ENCODE measurements at regions of chr20 and their contacts with region 1.

Region 1: DNA sequence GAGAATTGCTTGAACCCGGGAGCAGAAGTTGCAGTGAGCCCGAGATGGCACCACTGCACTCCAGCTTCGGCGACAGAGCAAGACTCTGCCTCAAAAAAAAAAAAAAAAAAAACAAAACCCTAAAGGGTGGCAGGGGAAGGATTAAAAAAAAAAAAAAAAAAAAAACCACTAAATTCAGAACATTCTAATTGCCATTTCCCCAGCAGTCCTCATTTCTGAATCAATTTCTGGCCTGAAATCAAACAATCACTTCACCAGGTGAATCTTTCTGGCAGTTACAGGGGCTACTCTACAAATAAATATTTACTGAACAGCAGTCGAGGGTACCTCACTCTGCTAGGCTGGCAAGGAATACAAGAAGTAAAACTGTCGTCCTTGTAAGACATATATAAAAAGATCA is 1.2 kb downstream of the UQCC1 start:
- DNase-seq: no peak
- ATAC-seq: no peak
- H3K4me3 Mint-ChIP-seq: peak overlapping the region; percentile 91
- H3K27ac Mint-ChIP-seq: peak overlapping the region; percentile 100
- H3K4me1 Mint-ChIP-seq: peaks cover 21% of the 10 kb centered on the region
- H3K27me3 Mint-ChIP-seq: no peaks in the 10 kb centered on the region

Region 2: DNA sequence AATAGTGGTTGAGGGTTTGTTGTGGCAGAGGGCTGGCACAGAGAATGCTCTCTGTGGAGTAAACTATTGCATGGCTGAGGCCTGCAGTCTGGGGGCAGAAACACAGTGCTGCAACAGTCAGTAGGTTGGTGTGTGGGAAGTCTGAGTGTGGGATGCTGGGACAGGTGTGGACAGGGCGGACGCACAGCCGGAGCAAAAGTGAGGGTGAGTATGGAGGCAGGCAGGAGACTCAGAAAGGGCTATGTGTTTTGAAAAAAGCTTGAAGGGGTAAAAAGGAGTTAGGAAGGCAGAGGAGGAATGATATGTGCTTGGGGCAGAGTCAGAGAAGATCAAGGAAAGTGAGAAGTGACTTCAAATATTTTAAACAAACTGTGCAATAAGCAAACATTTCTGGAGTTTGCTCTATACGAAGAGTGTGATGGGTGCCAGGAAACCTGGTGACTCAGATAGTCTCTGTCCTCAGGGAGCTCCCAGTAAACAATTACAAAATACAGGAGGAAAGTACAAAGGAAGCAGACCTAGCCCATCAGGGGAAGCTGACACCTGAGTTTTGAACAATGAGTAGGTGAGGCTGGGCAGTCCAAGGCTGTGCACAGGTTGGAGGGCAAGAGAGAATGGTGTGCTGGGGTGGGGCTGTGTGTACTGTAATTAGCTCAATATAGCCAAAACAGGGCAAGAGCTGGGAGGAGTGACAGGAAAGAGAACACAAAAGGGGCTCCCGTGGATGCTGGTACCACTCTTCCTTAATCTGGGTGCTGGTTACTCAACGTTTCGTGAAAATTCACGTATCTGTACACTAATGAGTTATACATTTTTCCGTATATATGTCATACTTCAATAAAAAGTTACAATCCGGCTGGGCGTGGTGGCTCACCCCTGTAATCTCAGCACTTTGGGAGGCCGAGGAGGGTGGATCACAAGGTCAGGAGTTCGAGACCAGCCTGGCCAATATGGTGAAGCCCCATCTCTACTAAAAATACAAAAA is 788.9 kb before region 1 on chr20:
- CTCF ChIA-PET with region 1: no interaction called
- POLR2A ChIA-PET with region 1: no interaction called
- intact Hi-C with region 1: no loop called
- DNase-seq: no peak
- ATAC-seq: no peak
- H3K4me3 Mint-ChIP-seq: no peak overlapping the region
- H3K27ac Mint-ChIP-seq: no peak overlapping the region
- H3K4me1 Mint-ChIP-seq: peaks cover 14% of the 10 kb centered on the region
- H3K27me3 Mint-ChIP-seq: no peaks in the 10 kb centered on the region

Region 3: GRCh38 chr20:34825530-34826362 is 584.9 kb before region 1 on chr20 and contains the start of gene NCOA6:
- CTCF ChIA-PET with region 1: no interaction called
- POLR2A ChIA-PET with region 1: no interaction called
- intact Hi-C with region 1: loop called in 1 of 2 experiments (anchors 1 kb)
- DNase-seq: peak; percentile 95
- ATAC-seq: peak; percentile 67
- H3K4me3 Mint-ChIP-seq: peak within 1 kb of the TSS; percentile 86
- H3K27ac Mint-ChIP-seq: peak within 1 kb of the TSS; percentile 95
- H3K4me1 Mint-ChIP-seq: peaks cover 30% of the 10 kb centered on the region
- H3K27me3 Mint-ChIP-seq: no peaks in the 10 kb centered on the region
- total RNA-seq, gene NCOA6: 20.3 to 31.1 TPM

Region 4: GRCh38 chr20:35284267-35284991 is 126.2 kb before region 1 on chr20 and contains the start of gene EIF6:
- CTCF ChIA-PET with region 1: no interaction called
- POLR2A ChIA-PET with region 1: interaction called, 3 read pairs
- intact Hi-C with region 1: loop called in 1 of 2 experiments (anchors 1 kb)
- DNase-seq: peak; percentile 88
- ATAC-seq: peak; percentile 85
- H3K4me3 Mint-ChIP-seq: peak within 1 kb of the TSS; percentile 81
- H3K27ac Mint-ChIP-seq: peak within 1 kb of the TSS; percentile 91
- H3K4me1 Mint-ChIP-seq: peaks cover 23% of the 10 kb centered on the region
- H3K27me3 Mint-ChIP-seq: no peaks in the 10 kb centered on the region
- total RNA-seq, gene EIF6: 110 to 124 TPM

Region 5: DNA sequence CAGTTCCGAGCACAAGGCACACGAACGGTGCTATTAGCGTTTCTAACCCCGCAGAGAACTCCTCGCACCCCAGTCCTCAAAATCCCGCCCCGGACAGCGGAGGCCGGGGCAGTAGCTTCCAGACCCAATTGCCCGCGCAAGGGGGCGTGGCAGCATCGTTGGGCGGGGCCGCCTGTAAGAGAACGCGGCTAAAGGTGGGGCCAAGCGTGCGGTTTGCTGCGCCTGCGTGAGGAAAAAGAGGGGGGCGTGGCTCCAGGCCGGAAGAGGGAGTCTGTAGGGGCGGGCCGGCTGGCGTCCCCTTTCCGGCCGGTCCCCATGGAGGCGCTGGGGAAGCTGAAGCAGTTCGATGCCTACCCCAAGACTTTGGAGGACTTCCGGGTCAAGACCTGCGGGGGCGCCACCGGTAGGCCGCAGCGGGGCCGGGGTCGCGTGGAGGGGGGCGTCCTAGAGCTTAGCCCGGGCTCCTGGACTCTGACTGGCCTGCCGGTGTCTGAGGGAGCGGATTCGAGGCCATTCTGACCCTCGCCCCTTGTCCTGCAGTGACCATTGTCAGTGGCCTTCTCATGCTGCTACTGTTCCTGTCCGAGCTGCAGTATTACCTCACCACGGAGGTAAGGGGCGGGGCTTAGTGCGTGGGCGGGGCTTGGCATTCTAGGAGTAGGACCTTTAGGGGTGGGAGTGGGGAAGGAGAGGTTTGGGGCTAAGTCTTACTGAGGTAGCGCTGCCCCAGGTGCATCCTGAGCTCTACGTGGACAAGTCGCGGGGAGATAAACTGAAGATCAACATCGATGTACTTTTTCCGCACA is 131.4 kb after region 1 on chr20 and contains the start of gene ERGIC3:
- CTCF ChIA-PET with region 1: no interaction called
- POLR2A ChIA-PET with region 1: no interaction called
- intact Hi-C with region 1: loop called in 1 of 2 experiments (anchors 1 kb)
- DNase-seq: peak; percentile 99
- ATAC-seq: peak; percentile 99
- H3K4me3 Mint-ChIP-seq: peak within 1 kb of the TSS; percentile 83
- H3K27ac Mint-ChIP-seq: peak within 1 kb of the TSS; percentile 83
- H3K4me1 Mint-ChIP-seq: peaks cover 15% of the 10 kb centered on the region
- H3K27me3 Mint-ChIP-seq: no peaks in the 10 kb centered on the region
- total RNA-seq, gene ERGIC3: 109 to 127 TPM

Region 6: GRCh38 chr20:36235892-36236785 is 825.5 kb after region 1 on chr20 and contains the start of gene AAR2:
- CTCF ChIA-PET with region 1: no interaction called
- POLR2A ChIA-PET with region 1: no interaction called
- intact Hi-C with region 1: loop called in 1 of 2 experiments (anchors 5 kb)
- DNase-seq: peak; percentile 91
- ATAC-seq: peak; percentile 99
- H3K4me3 Mint-ChIP-seq: peak within 1 kb of the TSS; percentile 78
- H3K27ac Mint-ChIP-seq: peak within 1 kb of the TSS; percentile 81
- H3K4me1 Mint-ChIP-seq: peaks cover 32% of the 10 kb centered on the region
- H3K27me3 Mint-ChIP-seq: no peaks in the 10 kb centered on the region
- total RNA-seq, gene AAR2: 18.7 to 20.7 TPM

Region 7: DNA sequence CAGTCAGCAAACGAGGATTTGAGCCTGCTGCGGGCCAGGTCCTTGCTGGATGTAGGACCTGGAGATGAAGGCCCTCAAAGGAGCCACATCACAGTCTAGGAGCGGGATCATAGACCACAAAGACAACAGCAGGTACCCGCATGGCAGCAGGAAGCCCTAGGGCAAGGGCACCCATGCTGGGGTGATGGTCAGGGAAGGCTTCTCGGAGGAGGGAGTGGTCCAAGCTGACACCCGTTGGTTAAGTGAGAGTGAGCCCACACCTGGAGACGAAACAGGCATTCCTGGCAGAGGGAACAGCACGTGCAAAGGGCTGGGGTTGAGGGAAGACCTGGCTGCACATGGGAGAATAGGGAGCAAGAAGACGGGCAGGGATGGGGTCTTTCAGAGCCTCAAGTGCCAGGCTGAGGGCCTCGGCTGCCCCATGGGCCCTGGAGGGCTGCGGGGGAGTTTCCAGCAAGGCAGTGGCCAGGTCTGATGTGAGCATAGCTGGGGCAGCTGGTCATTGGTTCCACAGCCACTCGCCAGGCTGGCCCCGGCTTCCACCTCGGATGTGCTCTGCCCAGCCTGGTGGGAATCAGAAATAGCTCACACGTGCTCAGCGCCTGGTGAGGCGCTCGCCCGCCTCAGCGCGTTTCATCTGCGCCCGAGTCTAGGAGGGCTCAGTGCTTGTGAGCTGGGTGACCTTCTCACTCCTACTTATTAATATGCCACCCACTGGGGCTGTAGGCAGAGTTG is 910.5 kb after region 1 on chr20:
- CTCF ChIA-PET with region 1: no interaction called
- POLR2A ChIA-PET with region 1: no interaction called
- intact Hi-C with region 1: no loop called
- DNase-seq: no peak
- ATAC-seq: no peak
- H3K4me3 Mint-ChIP-seq: no peak overlapping the region
- H3K27ac Mint-ChIP-seq: no peak overlapping the region
- H3K4me1 Mint-ChIP-seq: no peaks in the 10 kb centered on the region
- H3K27me3 Mint-ChIP-seq: peaks cover 7% of the 10 kb centered on the region

Measured in activated CD4-positive, alpha-beta T cell treated with anti-CD3 and anti-CD28 coated beads for 36 hours (primary cell).